Psoas muscle (tissue), 8 donors: ENCODE measurements at regions of chr2 and their contacts with region 1.

Region 1: GRCh38 chr2:58448065-58448507 is 207.0 kb upstream of the FANCL start:
- DNase-seq: no peak
- ATAC-seq: peak in 3 of 4 donors; percentile 58 to 72 (median 65)
- H3K4me3 ChIP-seq: no peak overlapping the region
- H3K27ac ChIP-seq: no peak overlapping the region
- H3K4me1 ChIP-seq: no peaks in the 10 kb centered on the region
- H3K27me3 ChIP-seq: no peaks in the 10 kb centered on the region
- CTCF ChIP-seq: peak; percentile 27

Region 2: DNA sequence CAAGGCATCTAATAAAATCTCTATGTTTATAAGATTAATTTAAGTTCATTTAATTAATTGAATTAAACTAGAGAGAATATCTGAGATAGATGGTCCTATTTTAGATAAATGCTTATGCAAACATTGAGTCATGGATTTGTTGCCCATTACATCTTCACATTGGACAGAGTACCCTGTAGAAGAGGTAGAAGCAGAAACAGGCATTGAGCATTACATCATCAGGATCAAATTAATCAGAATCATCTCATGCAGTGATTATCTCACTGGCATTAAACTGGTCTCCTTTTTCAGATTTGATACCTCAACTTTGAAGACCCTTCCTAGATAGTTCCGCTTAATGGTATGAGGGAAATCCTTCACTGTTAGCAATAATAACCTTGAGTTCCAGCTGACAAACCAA is 871.1 kb before region 1 on chr2:
- intact Hi-C with region 1: no loop called
- DNase-seq: no peak
- ATAC-seq: no peak
- H3K4me3 ChIP-seq: no peak overlapping the region
- H3K27ac ChIP-seq: no peak overlapping the region
- H3K4me1 ChIP-seq: no peaks in the 10 kb centered on the region
- H3K27me3 ChIP-seq: no peaks in the 10 kb centered on the region
- CTCF ChIP-seq: no peak

Region 3: GRCh38 chr2:57759822-57760300 is 688.2 kb before region 1 on chr2:
- intact Hi-C with region 1: loop called (anchors 5 to 10 kb)
- DNase-seq: peak; percentile 80 to 89
- ATAC-seq: peak; percentile 90 to 99 (median 96)
- H3K4me3 ChIP-seq: peak overlapping the region; percentile 50
- H3K27ac ChIP-seq: no peak overlapping the region
- H3K4me1 ChIP-seq: peaks cover 5% of the 10 kb centered on the region
- H3K27me3 ChIP-seq: no peaks in the 10 kb centered on the region
- CTCF ChIP-seq: peak; percentile 95

Region 4: GRCh38 chr2:57881998-57882884 is 565.8 kb before region 1 on chr2:
- intact Hi-C with region 1: no loop called
- DNase-seq: no peak
- ATAC-seq: no peak
- H3K4me3 ChIP-seq: no peak overlapping the region
- H3K27ac ChIP-seq: no peak overlapping the region
- H3K4me1 ChIP-seq: no peaks in the 10 kb centered on the region
- H3K27me3 ChIP-seq: no peaks in the 10 kb centered on the region
- CTCF ChIP-seq: no peak

Region 5: GRCh38 chr2:57899898-57900297 is 548.2 kb before region 1 on chr2:
- intact Hi-C with region 1: loop called in 1 of 2 experiments (anchors 5 kb)
- DNase-seq: no peak
- ATAC-seq: no peak
- H3K4me3 ChIP-seq: no peak overlapping the region
- H3K27ac ChIP-seq: no peak overlapping the region
- H3K4me1 ChIP-seq: no peaks in the 10 kb centered on the region
- H3K27me3 ChIP-seq: no peaks in the 10 kb centered on the region
- CTCF ChIP-seq: no peak

Region 6: DNA sequence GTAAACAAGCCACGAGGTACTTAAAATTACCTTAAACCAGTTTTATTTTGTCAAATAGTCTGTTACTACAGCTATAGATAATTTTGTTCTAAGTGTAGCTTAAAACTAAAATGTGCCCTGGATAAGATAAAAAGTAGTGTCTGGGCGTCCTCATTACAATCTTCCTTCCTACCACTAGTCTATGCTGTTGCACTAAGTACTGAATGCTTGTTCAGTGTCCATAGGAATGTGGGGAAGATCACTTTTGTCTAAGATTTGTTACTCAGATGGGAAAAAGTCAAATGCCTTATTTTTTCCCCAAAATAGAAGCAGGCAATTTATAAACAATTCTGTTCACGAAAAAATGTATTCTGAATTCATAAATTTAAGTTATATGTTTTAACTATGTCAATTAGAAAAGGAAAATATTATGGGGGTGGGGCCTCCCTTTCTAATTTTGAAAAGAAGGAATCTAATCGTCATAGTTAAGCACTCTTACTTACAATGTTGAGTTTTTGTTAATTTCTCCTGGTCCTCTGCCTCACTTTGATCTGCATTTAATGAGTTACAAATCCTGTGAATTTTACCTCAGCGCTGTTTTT is 541.8 kb before region 1 on chr2:
- intact Hi-C with region 1: loop called (anchors 2 to 5 kb)
- DNase-seq: no peak
- ATAC-seq: peak; percentile 60 to 85 (median 78)
- H3K4me3 ChIP-seq: no peak overlapping the region
- H3K27ac ChIP-seq: no peak overlapping the region
- H3K4me1 ChIP-seq: no peaks in the 10 kb centered on the region
- H3K27me3 ChIP-seq: no peaks in the 10 kb centered on the region
- CTCF ChIP-seq: peak; percentile 76